ENCODE measurements at regions of chr19 and their contacts with region 1.

Region 1: GRCh38 chr19:46404055-46404752 is 9.2 kb downstream of the CCDC8 start:
- DNase-seq: peak; percentile 80 to 81
- H3K4me3 ChIP-seq: peak overlapping the region; percentile 55
- H3K4me3 Mint-ChIP-seq: peak overlapping the region; percentile 97
- H3K27ac Mint-ChIP-seq: peak overlapping the region; percentile 95
- H3K4me1 ChIP-seq: no peaks in the 10 kb centered on the region
- H3K4me1 Mint-ChIP-seq: peaks cover 14% of the 10 kb centered on the region
- H3K27me3 ChIP-seq: no peaks in the 10 kb centered on the region
- H3K27me3 Mint-ChIP-seq: no peaks in the 10 kb centered on the region
- CTCF ChIP-seq: peak; percentile 29 to 44

Region 2: DNA sequence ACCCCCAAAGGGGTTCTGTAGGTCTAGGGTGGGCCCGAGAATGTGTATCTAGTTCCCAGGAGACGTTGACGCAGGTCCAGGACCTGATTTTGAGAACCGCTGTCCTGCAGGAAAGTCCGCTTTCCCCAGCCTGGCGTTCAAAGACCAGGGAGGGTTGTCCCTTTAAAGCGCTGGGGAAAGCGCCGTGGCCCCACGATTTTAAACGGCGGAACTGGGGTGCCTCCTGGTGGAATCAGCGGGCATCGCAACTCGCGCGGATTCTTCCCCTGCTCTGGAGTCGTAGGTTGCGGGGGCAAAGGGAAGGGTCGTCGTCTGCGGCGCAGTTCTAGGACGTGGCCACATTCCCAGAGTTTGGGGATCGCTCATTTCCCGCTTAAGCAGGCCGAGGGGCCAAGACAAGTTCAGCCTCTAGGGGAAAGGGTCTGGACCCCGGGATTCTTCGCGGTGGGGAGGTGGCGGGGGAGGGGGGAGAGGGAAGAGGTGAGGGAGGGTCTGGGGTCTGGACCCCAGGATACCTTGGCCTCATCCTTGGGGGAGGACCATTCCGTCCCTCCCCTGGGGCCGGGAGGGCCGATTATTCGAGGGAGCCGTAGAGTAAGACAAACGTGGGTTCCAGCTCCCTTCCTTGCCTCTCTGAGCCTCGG is 83.7 kb after region 1 on chr19:
- CTCF ChIA-PET with region 1: interaction called, 7 read pairs
- POLR2A ChIA-PET with region 1: no interaction called
- intact Hi-C with region 1: loop called (anchors 1 kb)
- DNase-seq: peak; percentile 71 to 86
- H3K4me3 ChIP-seq: peak overlapping the region; percentile 22
- H3K4me3 Mint-ChIP-seq: peak overlapping the region; percentile 43
- H3K27ac Mint-ChIP-seq: no peak overlapping the region
- H3K4me1 ChIP-seq: no peaks in the 10 kb centered on the region
- H3K4me1 Mint-ChIP-seq: no peaks in the 10 kb centered on the region
- H3K27me3 ChIP-seq: peaks cover 1% of the 10 kb centered on the region
- H3K27me3 Mint-ChIP-seq: peaks cover 13% of the 10 kb centered on the region
- CTCF ChIP-seq: peak; percentile 93 to 94

Region 3: DNA sequence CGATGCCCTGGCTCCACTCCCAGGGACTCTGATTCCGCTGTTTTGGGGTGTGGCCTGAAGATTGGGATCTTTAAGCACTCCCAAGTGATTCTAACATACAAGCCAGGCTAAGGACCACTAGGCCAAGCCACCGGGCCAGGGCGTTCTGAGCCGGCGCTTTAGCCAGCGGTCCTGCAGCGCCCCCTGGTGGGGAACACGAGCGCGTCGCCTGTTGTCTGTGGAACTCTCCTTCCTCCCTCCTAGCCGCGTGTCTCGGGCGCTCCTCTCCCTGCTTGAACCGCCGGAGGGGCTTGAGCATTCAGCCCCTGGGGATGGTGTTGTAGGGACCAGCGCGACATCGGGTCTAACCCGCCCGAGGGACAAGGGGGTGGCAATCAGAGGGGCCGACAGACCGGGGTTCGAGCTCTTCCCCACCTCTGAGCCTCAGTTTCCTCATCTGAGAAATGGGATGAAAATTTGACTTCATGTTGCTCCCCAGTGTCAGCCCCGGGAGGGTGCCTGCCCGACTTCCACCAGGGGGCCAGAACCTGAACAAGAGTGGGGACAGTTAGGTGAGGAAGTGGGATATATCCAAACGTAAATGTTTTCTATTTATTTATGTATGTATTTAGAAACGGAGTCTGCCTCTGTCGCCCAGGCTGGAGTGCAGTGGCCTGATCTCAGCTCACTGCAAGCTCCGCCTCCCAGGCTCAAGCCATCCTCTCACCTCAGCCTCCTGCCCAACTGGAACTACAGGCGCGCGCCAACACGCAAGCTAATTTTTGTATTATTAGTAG is 109.4 kb after region 1 on chr19:
- CTCF ChIA-PET with region 1: interaction called, 3 read pairs
- POLR2A ChIA-PET with region 1: no interaction called
- intact Hi-C with region 1: loop called (anchors 2 kb)
- DNase-seq: peak; percentile 67 to 84
- H3K4me3 ChIP-seq: no peak overlapping the region
- H3K4me3 Mint-ChIP-seq: no peak overlapping the region
- H3K27ac Mint-ChIP-seq: no peak overlapping the region
- H3K4me1 ChIP-seq: no peaks in the 10 kb centered on the region
- H3K4me1 Mint-ChIP-seq: no peaks in the 10 kb centered on the region
- H3K27me3 ChIP-seq: no peaks in the 10 kb centered on the region
- H3K27me3 Mint-ChIP-seq: no peaks in the 10 kb centered on the region
- CTCF ChIP-seq: peak; percentile 87 to 91

Measured in Caco-2 (cell line).